Activated CD8-positive, alpha-beta memory T cell treated with anti-CD3 and anti-CD28 coated beads, Interleukin-2, amount 10 ng/mL, durations not matched to agents 7 days and 5 days (primary cell): ENCODE measurements at regions of chr9 and their contacts with region 1.

Region 1: GRCh38 chr9:114587385-114588202 is at the start of gene ATP6V1G1:
- DNase-seq: peak; percentile 100
- ATAC-seq: peak; percentile 95
- H3K4me3 Mint-ChIP-seq: peak within 1 kb of the TSS; percentile 96
- H3K27ac Mint-ChIP-seq: peak within 1 kb of the TSS; percentile 96
- H3K4me1 Mint-ChIP-seq: peaks cover 46% of the 10 kb centered on the region
- H3K27me3 Mint-ChIP-seq: no peaks in the 10 kb centered on the region
- total RNA-seq, gene ATP6V1G1: 62.4 to 66.7 TPM

Region 2: DNA sequence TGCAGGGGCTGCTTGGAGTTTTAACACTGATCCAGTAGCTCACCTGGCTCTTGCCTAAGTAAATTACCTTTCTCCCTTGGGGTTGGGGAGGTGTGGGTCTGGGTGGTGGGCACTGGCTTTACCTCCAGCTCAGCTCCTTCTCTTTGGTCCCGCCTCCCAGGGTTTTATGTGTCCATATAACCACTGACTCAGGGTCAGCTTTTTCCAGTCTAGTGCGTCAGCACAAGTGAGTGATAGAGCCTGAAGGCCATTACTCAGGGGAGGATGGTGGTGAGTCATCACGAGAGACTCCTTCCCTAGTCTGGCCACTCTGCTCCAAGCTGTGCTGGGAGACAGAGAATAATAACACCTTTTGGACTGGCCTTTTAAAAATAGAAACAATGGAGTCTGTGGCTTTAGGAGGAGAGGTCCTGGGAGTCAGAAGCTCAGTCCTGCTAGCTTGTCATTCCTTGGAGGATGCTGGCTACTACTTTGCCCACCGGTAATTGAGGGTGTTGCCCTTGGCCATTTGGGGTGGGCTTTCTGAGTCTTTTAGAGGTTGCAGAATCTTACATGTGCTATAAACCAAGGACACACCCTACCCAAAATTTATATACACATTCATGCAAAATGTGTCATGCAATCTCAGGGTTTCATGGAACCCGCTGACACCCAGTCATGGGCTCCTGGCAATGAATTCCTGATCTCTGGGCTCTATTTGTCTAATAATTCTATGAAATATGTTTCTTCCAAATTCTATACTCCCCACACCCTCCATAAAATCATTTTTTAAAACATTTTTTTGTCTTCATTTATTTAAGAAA is 35.5 kb before region 1 on chr9:
- CTCF ChIA-PET with region 1: no interaction called
- DNase-seq: no peak
- ATAC-seq: no peak
- H3K4me3 Mint-ChIP-seq: no peak overlapping the region
- H3K27ac Mint-ChIP-seq: no peak overlapping the region
- H3K4me1 Mint-ChIP-seq: no peaks in the 10 kb centered on the region
- H3K27me3 Mint-ChIP-seq: peaks cover 20% of the 10 kb centered on the region

Region 3: GRCh38 chr9:114611516-114612271 is 24.1 kb after region 1 on chr9:
- CTCF ChIA-PET with region 1: interaction called, 35 read pairs
- DNase-seq: peak; percentile 60
- ATAC-seq: peak; percentile 76
- H3K4me3 Mint-ChIP-seq: peak overlapping the region; percentile 91
- H3K27ac Mint-ChIP-seq: peak overlapping the region; percentile 92
- H3K4me1 Mint-ChIP-seq: peaks cover 45% of the 10 kb centered on the region
- H3K27me3 Mint-ChIP-seq: no peaks in the 10 kb centered on the region

Region 4: GRCh38 chr9:114662081-114662989 is 74.7 kb after region 1 on chr9:
- CTCF ChIA-PET with region 1: interaction called, 10 read pairs
- DNase-seq: peak; percentile 76
- ATAC-seq: peak; percentile 94
- H3K4me3 Mint-ChIP-seq: no peak overlapping the region
- H3K27ac Mint-ChIP-seq: no peak overlapping the region
- H3K4me1 Mint-ChIP-seq: peaks cover 2% of the 10 kb centered on the region
- H3K27me3 Mint-ChIP-seq: peaks cover 28% of the 10 kb centered on the region